GM13976 (cell line): ENCODE measurements at regions of chr3 and their contacts with region 1.

Region 1: DNA sequence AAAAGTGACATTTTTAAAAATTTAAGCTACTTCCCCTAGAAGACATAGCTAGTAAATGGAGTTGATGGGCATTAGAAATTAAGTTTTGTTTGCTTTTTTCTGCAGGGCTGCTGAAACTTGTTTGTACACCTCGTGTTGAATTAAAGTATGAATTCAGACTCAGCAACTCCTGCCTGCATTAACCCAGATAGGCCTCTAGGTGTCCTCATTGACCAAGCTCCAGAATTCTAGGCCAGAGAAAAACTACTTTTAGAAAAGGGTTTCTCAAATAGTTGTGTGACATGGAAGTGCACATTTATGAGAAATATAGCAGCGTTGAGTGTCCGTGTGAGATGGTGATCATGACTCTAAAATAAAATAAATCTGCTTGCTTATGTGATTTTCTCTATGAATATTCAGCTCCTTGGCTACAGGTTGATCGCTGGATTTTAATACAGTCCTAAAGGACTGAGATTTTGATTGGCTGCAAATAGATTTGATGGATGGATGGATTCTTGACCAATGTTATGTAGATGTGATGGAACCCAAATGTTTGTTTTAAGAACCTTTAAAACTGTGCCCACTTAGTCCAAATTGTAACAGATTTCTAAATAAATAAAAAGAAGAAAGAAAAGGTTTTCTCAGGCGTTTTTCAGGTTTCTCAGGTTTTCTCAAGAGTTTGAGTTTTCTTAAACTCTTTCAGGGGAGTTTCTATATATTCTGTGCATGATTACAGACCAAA is 39.4 kb upstream of the LMOD3 start:
- DNase-seq: peak; percentile 60
- CTCF ChIP-seq: peak; percentile 73

Region 2: DNA sequence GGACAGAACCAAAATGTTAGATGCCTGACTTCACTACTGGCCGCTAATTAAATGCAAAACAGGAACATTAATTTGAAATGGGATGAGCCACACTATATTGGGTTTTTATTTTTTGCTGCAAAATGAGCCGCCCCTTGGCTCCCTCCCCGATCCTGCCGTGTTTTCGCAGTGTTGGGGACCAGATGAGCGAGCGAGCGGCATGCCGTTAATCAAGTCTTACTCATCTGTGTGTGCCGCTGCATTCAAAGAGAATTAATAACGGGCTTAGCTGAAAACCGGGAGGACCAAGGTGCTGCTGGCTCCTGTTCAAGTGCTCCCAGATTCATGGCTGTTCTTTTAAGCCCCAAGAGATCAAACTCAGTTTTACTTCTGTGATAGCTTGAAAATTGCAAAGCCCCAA is 249.4 kb before region 1 on chr3:
- in situ Hi-C with region 1: no loop called
- DNase-seq: no peak
- CTCF ChIP-seq: no peak

Region 3: GRCh38 chr3:69306239-69307185 is 144.8 kb after region 1 on chr3:
- in situ Hi-C with region 1: loop called (anchors 5 kb)
- DNase-seq: peak; percentile 67
- CTCF ChIP-seq: peak; percentile 68

Region 4: GRCh38 chr3:69385723-69386555 is 224.2 kb after region 1 on chr3 and contains the start of gene FRMD4B:
- in situ Hi-C with region 1: no loop called
- DNase-seq: peak; percentile 73
- CTCF ChIP-seq: peak; percentile 33

Region 5: DNA sequence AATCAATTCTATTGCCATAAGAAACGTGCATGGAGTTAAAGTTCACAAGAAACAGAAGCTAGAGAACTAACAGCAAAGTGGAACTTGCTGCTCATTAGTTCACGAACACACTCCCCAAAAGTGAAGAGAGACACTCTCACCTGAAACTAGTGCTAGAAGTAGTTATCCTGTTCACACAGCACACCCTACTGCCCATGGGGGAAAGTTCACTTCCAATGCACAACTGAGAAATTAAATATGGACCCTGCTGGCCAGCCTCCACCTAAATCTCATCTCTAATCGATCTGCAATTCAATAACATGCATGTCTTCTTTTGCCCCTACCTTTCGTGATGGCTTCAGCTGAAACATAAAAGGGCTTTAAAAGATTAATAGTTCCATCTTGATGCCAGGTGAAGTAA is 263.5 kb after region 1 on chr3:
- in situ Hi-C with region 1: loop called (anchors 10 kb)
- DNase-seq: peak; percentile 42
- CTCF ChIP-seq: peak; percentile 62

Region 6: DNA sequence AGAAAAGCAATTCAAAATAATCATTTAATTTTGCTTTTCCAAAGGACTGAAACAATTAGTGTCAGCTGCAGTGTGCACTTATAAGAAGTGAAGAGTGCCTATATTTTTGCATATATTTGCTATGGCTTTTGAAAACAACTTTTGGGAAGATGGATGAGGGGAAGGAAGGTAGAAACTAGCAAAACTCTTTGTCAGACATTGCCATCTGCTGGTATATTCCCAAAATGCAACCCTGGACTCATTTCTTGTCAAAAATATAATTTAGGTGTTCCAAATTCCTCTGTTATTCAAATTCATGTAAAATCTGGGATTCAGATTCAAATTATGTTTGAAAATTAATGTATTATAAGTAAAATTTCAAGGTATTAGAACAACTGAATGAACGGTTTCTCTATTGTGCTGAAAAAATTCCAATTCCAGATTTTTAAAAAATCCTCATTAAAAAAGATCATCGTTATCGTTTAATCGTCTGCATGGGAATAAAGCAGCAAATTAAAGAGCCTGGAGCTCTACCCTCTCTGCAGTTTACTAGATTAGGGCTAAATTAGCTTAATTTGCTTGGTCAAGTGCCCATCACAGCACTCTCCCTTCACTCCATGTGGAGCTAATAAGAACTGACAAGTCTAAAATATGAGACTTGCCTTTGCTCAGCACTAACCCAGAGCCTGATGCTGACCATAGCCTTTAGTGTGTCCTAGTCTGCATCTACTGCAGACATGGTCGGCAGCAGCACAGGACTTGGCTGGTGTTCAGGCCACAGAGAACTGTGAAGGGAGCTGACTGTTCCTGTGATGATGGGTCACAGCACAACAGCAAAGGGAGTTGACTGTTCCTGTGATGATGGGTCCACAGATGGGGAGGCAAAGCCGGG is 509.6 kb after region 1 on chr3:
- in situ Hi-C with region 1: loop called (anchors 25 kb)
- DNase-seq: peak; percentile 36
- CTCF ChIP-seq: peak; percentile 54